ENCODE measurements at regions of chr1 and their contacts with region 1.

Region 1: GRCh38 chr1:154558575-154559465 is at the start of gene UBE2Q1:
- DNase-seq: peak; percentile 94 to 98 (median 96)
- ATAC-seq: peak; percentile 94
- H3K4me3 ChIP-seq: peak within 1 kb of the TSS; percentile 82
- H3K27ac ChIP-seq: peak within 1 kb of the TSS; percentile 82
- H3K4me1 ChIP-seq: peaks cover 18 to 21% of the 10 kb centered on the region in 2 experiments; a peak in 4 of 5 replicates
- H3K27me3 ChIP-seq: peaks cover 2 to 9% of the 10 kb centered on the region in 2 experiments; a peak in 1 of 5 replicates
- CTCF ChIP-seq: 0 out of 6 replicates have a peak, but pooled peaks of 1 of the 3 experiments have one; percentile 6
- EP300 ChIP-seq: no peak
- POLR2A ChIP-seq: peak; percentile 80
- RAD21 ChIP-seq: no peak
- polyA plus RNA-seq, gene UBE2Q1: 8.0 to 10.6 TPM

Region 2: GRCh38 chr1:154093699-154094098 is 465.1 kb before region 1 on chr1:
- CTCF ChIA-PET with region 1: no interaction called
- POLR2A ChIA-PET with region 1: no interaction called
- in situ Hi-C with region 1: no loop called
- intact Hi-C with region 1: no loop called
- DNase-seq: no peak
- ATAC-seq: no peak
- H3K4me3 ChIP-seq: no peak overlapping the region
- H3K27ac ChIP-seq: no peak overlapping the region
- H3K4me1 ChIP-seq: no peaks in the 10 kb centered on the region
- H3K27me3 ChIP-seq: peaks cover 0 to 10% of the 10 kb centered on the region in 2 experiments; a peak in 1 of 5 replicates
- CTCF ChIP-seq: no peak
- EP300 ChIP-seq: no peak
- POLR2A ChIP-seq: no peak
- RAD21 ChIP-seq: no peak

Region 3: DNA sequence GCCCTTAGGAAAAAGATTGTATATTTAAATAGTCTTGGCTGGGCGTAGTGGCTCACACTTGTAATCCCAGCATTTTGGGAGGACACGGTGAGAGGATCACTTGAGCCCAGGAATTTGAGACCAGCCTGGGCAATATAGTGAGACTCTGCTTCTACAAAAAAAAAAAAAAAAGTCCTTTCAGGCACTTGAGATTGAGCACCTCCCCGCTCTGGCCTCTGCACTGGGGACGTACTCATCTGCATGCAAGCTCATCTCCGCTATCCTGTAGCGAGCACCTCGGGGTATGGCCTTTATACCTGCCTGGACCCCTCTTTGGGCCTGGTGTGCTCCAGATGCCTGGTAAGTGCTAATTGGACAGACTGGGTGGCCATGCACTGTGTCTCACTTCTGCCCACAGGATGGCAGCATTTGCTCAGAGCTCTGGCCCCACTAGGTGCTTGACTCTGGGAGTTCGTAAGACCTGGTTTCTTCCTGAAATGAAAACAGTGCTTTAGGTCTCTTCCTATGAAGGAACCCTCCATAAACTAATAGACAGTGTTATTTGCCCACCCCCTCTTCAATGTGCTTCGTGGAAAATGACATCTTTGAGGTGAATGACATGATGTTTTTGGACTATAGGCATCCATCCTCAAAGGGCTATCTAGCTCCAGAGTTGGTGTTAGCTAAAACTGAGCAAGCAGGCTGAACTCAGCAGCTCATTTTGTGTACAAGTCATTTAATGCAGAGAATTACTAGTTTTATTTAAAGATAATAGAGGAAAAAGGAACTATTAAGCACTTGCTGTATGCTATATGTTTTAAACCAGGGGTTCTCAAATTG is 110.9 kb after region 1 on chr1:
- CTCF ChIA-PET with region 1: no interaction called
- POLR2A ChIA-PET with region 1: no interaction called
- in situ Hi-C with region 1: no loop called
- intact Hi-C with region 1: loop called (anchors 1 kb)
- DNase-seq: peak; percentile 60 to 77 (median 68)
- ATAC-seq: peak; percentile 100
- H3K4me3 ChIP-seq: no peak overlapping the region
- H3K27ac ChIP-seq: no peak overlapping the region
- H3K4me1 ChIP-seq: no peaks in the 10 kb centered on the region; a peak in 1 of 5 replicates
- H3K27me3 ChIP-seq: peaks cover 0 to 7% of the 10 kb centered on the region in 2 experiments; a peak in 1 of 5 replicates
- CTCF ChIP-seq: peak; percentile 84 to 89 (median 87)
- EP300 ChIP-seq: no peak
- POLR2A ChIP-seq: no peak
- RAD21 ChIP-seq: peak; percentile 91 to 94

Region 4: DNA sequence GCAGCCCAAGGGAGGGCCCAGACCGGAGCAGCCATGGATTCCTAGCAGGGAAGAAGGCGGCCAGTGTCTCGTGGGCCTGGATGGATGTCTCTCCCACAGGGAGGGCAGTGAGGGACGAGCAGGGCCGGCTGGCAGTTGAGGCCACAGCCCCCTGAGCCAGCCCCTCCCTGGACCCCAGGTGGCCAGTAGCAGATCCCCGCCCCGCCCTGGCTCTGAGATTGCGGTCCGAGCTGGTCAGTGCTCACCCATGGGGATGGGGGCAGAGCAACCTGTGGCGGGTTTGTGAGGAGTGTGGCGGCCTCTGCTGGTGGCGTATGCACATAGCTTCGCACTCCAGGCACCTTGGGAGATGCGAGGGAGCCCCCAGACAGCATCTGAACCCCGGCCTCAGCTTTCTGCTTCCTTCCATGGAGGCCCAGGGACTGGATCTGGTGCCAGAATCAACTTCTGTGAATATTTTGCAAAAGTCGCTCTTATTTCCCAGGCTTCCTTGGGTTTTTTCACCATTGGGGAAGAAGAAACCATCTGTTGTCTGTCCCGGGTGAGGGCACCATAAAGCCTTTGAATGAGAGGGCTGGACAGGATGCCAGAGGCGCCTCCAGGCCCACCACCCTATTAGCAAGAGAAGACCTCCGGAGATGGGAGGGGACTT is 319.7 kb after region 1 on chr1:
- CTCF ChIA-PET with region 1: interaction called, 19 read pairs
- POLR2A ChIA-PET with region 1: interaction called, 3 read pairs
- in situ Hi-C with region 1: no loop called
- intact Hi-C with region 1: loop called (anchors 1 kb)
- DNase-seq: peak; percentile 80 to 85 (median 81)
- ATAC-seq: peak; percentile 99
- H3K4me3 ChIP-seq: no peak overlapping the region
- H3K27ac ChIP-seq: no peak overlapping the region
- H3K4me1 ChIP-seq: peaks cover under 1 to 8% of the 10 kb centered on the region in 2 experiments; a peak in 4 of 5 replicates
- H3K27me3 ChIP-seq: peaks cover 0 to 30% of the 10 kb centered on the region in 2 experiments; a peak in 2 of 5 replicates
- CTCF ChIP-seq: peak; percentile 91 to 94 (median 94)
- EP300 ChIP-seq: no peak
- POLR2A ChIP-seq: no peak
- RAD21 ChIP-seq: peak; percentile 92 to 97

Region 5: GRCh38 chr1:155001675-155002463 is 443.0 kb after region 1 on chr1:
- CTCF ChIA-PET with region 1: interaction called, 3 read pairs
- POLR2A ChIA-PET with region 1: no interaction called
- in situ Hi-C with region 1: no loop called
- intact Hi-C with region 1: loop called (anchors 5 kb)
- DNase-seq: peak; percentile 90 to 100 (median 95)
- ATAC-seq: peak; percentile 81
- H3K4me3 ChIP-seq: peak overlapping the region; percentile 71
- H3K27ac ChIP-seq: peak overlapping the region; percentile 97
- H3K4me1 ChIP-seq: peaks cover 37 to 66% of the 10 kb centered on the region in 2 experiments
- H3K27me3 ChIP-seq: no peaks in the 10 kb centered on the region
- CTCF ChIP-seq: peak; percentile 60 to 70 (median 65)
- EP300 ChIP-seq: peak; percentile 32; the same call in 1 of the 2 replicates
- POLR2A ChIP-seq: 0 out of 2 replicates have a peak, but pooled peaks have one; percentile 56
- RAD21 ChIP-seq: peak; percentile 17 to 40; a peak in 2 of 4 replicates

Region 6: GRCh38 chr1:155084722-155085503 is 526.1 kb after region 1 on chr1:
- CTCF ChIA-PET with region 1: interaction called, 5 read pairs
- POLR2A ChIA-PET with region 1: no interaction called
- in situ Hi-C with region 1: no loop called
- intact Hi-C with region 1: loop called (anchors 5 kb)
- DNase-seq: peak; percentile 88 to 95 (median 92)
- ATAC-seq: peak; percentile 88
- H3K4me3 ChIP-seq: peak overlapping the region; percentile 59
- H3K27ac ChIP-seq: peak overlapping the region; percentile 72
- H3K4me1 ChIP-seq: peaks cover 28 to 61% of the 10 kb centered on the region in 2 experiments
- H3K27me3 ChIP-seq: peaks cover 3 to 8% of the 10 kb centered on the region in 2 experiments; a peak in 2 of 5 replicates
- CTCF ChIP-seq: peak; percentile 91 to 98 (median 97)
- EP300 ChIP-seq: peak; percentile 19; the same call in 1 of the 2 replicates
- POLR2A ChIP-seq: peak; percentile 36; the same call in 1 of the 2 replicates
- RAD21 ChIP-seq: peak; percentile 99